Calu3 (cell line): ENCODE measurements at regions of chr2 and their contacts with region 1.

Region 1: DNA sequence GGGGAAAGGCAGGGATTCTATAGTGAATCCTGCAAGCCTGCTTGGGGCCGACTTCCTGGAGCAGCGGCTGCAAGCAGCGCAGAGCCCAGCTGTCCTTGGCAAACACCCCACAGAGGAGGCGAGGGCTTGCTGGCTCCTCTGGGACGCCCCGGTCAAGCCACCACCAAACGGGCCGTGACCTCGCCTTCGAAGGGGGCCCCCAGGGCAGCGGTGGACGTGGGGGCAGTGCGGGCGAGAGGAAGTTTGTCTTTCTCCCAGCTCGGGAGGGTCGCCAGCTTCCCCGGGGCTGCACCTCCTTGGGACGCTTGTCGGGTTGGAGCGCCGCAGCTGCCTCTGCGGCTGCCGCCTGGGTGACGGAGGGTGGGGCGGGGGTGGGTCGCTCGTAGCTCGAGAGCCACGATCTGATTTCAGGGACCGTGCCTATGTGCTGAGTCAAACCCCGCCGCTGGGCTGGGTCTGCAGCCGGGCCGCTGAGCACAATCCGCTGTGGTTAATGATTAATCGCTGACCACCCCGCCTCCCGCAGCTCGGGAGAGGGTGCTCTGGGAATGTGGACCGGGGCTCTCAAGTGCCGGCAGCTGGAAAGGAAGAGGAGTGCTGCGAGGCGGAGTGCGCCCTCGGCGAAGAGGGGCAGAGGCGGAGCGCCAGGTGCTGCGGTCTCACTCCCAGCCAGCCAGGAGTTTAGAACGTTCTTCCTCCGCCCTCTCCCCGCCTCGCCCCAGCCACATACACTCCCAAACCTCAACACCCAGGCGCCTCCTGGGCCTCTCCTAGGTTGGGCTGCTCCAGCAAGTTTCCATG is at the start of gene GPR39:
- DNase-seq: peak; percentile 97
- H3K4me3 Mint-ChIP-seq: peak within 1 kb of the TSS; percentile 77
- H3K27ac Mint-ChIP-seq: peak within 1 kb of the TSS; percentile 62
- H3K4me1 Mint-ChIP-seq: peaks cover 50% of the 10 kb centered on the region
- H3K27me3 Mint-ChIP-seq: no peaks in the 10 kb centered on the region
- CTCF ChIP-seq: no peak
- total RNA-seq, gene GPR39: 24.1 and 24.9 TPM in 2 replicates

Region 2: GRCh38 chr2:132256251-132256902 is 159.9 kb before region 1 on chr2:
- CTCF ChIA-PET with region 1: no interaction called
- intact Hi-C with region 1: no loop called
- DNase-seq: no peak
- H3K4me3 Mint-ChIP-seq: no peak overlapping the region
- H3K27ac Mint-ChIP-seq: peak overlapping the region; percentile 45
- H3K4me1 Mint-ChIP-seq: no peaks in the 10 kb centered on the region
- H3K27me3 Mint-ChIP-seq: no peaks in the 10 kb centered on the region
- CTCF ChIP-seq: no peak

Region 3: GRCh38 chr2:132267105-132267497 is 149.2 kb before region 1 on chr2:
- CTCF ChIA-PET with region 1: no interaction called
- intact Hi-C with region 1: loop called (anchors 2 kb)
- DNase-seq: no peak
- H3K4me3 Mint-ChIP-seq: no peak overlapping the region
- H3K27ac Mint-ChIP-seq: no peak overlapping the region
- H3K4me1 Mint-ChIP-seq: no peaks in the 10 kb centered on the region
- H3K27me3 Mint-ChIP-seq: no peaks in the 10 kb centered on the region
- CTCF ChIP-seq: no peak

Region 4: DNA sequence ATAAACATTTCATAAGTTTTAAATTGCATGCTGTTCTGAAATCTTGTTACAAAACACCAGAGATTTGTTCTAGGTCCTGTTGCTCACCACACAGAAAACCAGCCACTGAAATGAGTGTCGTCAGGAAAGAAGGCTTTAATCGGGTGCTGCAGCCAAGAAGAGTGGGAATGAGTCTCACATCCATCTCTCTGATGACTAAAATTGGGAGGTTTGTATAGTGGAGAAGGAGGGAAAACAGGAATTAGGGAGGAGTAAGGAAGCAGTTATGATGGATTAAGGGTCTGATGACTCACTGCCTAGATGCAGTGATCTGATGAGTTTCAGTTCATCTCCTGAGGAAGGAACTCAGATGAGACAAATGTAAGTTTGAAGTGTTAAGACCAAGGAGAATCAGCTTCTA is 41.7 kb before region 1 on chr2:
- CTCF ChIA-PET with region 1: no interaction called
- intact Hi-C with region 1: loop called (anchors 2 kb)
- DNase-seq: no peak
- H3K4me3 Mint-ChIP-seq: no peak overlapping the region
- H3K27ac Mint-ChIP-seq: peak overlapping the region; percentile 54
- H3K4me1 Mint-ChIP-seq: peaks cover 17% of the 10 kb centered on the region
- H3K27me3 Mint-ChIP-seq: no peaks in the 10 kb centered on the region
- CTCF ChIP-seq: no peak

Region 5: GRCh38 chr2:132384491-132385151 is 31.7 kb before region 1 on chr2:
- CTCF ChIA-PET with region 1: no interaction called
- intact Hi-C with region 1: no loop called
- DNase-seq: no peak
- H3K4me3 Mint-ChIP-seq: no peak overlapping the region
- H3K27ac Mint-ChIP-seq: no peak overlapping the region
- H3K4me1 Mint-ChIP-seq: no peaks in the 10 kb centered on the region
- H3K27me3 Mint-ChIP-seq: no peaks in the 10 kb centered on the region
- CTCF ChIP-seq: no peak

Region 6: DNA sequence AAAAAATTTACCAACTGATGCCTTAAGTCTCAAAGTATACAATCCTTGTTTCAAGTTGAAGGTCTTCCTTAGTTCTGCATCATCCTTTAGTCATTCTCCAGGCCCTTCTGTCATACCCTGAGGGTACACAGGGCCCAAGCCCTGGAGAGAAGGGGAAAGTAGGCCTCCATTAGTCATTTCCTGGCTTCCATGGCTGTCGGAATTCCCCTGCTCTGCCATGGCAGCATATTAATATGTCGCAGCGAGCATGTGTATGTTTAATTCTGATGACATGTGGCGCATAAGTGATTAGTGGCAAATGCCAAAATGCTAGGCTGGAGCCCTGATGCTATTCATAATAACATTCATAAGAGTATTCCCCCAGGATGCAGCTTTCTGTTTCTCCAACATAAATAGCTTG is 22.4 kb after region 1 on chr2:
- CTCF ChIA-PET with region 1: interaction called, 7 read pairs
- intact Hi-C with region 1: loop called (anchors 2 kb)
- DNase-seq: peak; percentile 64
- H3K4me3 Mint-ChIP-seq: peak overlapping the region; percentile 51
- H3K27ac Mint-ChIP-seq: peak overlapping the region; percentile 93
- H3K4me1 Mint-ChIP-seq: peaks cover 55% of the 10 kb centered on the region
- H3K27me3 Mint-ChIP-seq: no peaks in the 10 kb centered on the region
- CTCF ChIP-seq: no peak

Region 7: GRCh38 chr2:132595693-132596092 is 179.4 kb after region 1 on chr2:
- CTCF ChIA-PET with region 1: no interaction called
- intact Hi-C with region 1: loop called (anchors 2 kb)
- DNase-seq: no peak
- H3K4me3 Mint-ChIP-seq: no peak overlapping the region
- H3K27ac Mint-ChIP-seq: no peak overlapping the region
- H3K4me1 Mint-ChIP-seq: peaks cover 22% of the 10 kb centered on the region
- H3K27me3 Mint-ChIP-seq: no peaks in the 10 kb centered on the region
- CTCF ChIP-seq: no peak

Region 8: GRCh38 chr2:133130548-133131246 is 714.4 kb after region 1 on chr2:
- CTCF ChIA-PET with region 1: no interaction called
- intact Hi-C with region 1: no loop called
- DNase-seq: no peak
- H3K4me3 Mint-ChIP-seq: no peak overlapping the region
- H3K27ac Mint-ChIP-seq: peak overlapping the region; percentile 17
- H3K4me1 Mint-ChIP-seq: peaks cover 13% of the 10 kb centered on the region
- H3K27me3 Mint-ChIP-seq: no peaks in the 10 kb centered on the region
- CTCF ChIP-seq: no peak